Posterior vena cava (tissue), 2 donors: ENCODE measurements at regions of chr1 and their contacts with region 1.

Region 1: DNA sequence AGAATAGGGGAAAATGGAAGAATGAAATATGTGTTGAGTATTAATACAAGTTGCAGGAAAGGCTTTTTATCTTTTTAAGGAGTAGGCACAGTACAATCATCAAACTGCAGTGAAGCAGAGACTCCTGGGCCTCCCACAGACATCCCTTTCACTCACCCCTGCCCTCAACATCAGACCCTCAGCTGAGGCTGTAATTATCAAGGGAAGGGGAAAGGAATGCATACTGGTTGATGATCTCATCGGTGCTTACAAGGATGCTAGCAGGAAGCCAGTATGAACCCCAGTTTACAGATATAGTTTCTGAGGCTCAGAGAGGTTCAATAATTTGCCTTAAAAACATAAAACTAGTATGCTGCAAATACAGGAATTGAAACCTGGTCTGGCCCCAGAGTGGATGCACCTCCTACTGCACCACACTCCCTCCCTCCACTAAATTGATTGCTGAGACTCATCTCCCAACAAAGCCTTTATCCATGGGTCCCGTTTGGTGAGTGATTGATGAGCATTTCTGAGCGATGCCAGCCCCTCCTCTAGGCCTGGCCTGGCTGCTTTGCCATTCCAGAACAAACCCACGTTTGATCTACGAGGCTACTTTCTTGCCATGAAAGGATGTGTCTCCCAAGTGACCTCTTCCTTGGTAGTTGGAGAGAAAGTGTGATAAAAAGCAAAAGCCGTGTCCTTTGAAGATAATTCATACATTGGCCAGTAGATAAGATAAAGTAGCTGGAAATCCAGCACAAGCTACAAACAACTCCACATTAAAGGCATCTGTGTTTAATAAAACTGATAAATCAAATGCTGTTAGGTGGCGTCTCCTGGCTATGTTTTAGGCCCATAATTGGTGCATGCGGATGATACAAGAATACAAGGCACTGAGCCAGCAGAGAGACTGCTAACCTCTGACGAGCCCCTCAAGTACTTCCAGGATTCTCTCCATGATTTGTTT is 233.9 kb upstream of the CAMK1G start:
- DNase-seq: no peak

Region 2: DNA sequence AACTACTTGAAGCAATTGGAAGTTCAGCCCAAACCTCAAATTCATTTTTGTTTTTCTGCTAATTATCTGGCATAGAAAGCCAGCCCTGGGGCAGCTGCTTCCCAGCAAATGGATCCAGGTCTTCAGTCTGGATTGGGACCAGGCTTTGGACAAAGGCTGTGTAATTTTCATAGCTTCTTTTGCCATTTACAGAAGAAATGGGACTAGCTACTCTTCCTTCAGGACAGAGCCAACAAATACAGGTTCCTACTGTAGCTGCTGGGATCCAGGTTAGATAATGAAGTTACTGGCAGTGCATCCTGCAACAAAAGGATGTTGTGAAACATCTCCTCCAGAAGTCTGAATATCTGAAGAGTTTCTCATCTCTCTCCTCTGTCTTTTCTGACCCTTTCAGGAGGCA is 62.4 kb after region 1 on chr1:
- intact Hi-C with region 1: loop called in 1 of 2 experiments (anchors 2 kb)
- DNase-seq: no peak